Dorsolateral prefrontal cortex (tissue), 120 donors: ENCODE measurements at regions of chr13 and their contacts with region 1.

Region 1: GRCh38 chr13:52450012-52450792 is at the start of gene VPS36:
- DNase-seq: peak; percentile 91 to 98 (median 94)
- H3K4me3 ChIP-seq: peak within 1 kb of the TSS; percentile 63 to 96 (median 82)
- H3K27ac ChIP-seq: peak within 1 kb of the TSS; percentile 53 to 97 (median 90)
- H3K27me3 ChIP-seq: no peaks in the 10 kb centered on the region
- CTCF ChIP-seq: peak; percentile 95 to 100 (median 99)
- total RNA-seq, gene VPS36: 34.5 to 82.0 (median 58.9) TPM

Region 2: DNA sequence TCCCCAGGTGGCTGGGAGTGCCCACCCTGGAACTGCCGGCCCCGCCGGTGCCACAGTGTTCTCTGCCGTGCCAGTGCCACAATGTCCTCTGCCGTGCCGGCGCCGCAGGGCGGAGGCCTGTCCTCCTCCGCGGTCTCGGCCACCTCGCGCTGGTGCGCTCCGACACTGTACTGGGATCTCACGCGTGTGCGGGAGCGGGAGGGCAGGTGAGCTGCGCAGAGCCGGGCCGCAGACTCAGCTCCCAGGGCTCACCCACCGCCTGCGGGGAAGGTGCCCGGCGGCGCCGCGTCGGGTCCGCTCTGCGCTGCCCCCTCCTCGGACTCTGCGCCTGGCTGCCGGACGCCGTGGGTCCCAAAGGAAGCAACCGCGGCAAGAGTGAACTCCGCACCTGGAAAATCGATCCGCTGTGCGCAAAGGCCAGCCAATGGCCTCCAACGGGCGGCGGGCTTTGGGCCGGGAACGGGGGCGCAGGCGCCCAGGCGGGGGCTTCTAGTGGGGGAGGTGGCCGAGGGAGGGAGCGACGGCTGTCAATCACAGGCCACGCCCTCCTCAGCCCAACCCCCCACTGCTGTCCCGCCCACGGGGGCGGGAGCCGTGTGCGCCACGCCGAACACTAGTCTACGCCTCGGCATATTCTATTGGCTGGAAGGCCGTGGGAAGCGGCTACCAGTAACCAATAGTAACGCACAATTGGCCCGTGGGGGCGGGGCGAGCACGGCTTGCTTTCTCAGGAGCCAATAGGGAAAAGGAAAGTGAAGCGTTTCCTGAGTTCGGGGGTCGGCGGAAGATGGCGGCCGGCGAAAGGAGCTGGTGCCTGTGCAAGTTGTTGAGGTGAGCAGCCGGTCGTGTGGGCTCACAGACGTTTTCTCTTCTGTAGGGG is 438.3 kb before region 1 on chr13 and contains the start of gene ALG11:
- intact Hi-C with region 1: loop called (anchors 5 to 10 kb)
- DNase-seq: peak; percentile 99 to 100 (median 99)
- H3K4me3 ChIP-seq: peak within 1 kb of the TSS; percentile 64 to 100 (median 92)
- H3K27ac ChIP-seq: peak within 1 kb of the TSS in 53 of 59 donors; percentile 2 to 85 (median 70)
- H3K27me3 ChIP-seq: no peaks in the 10 kb centered on the region
- CTCF ChIP-seq: peak in 26 of 56 donors; percentile 2 to 49 (median 22)
- total RNA-seq, gene ALG11: 21.8 to 45.8 (median 34.2) TPM

Region 3: DNA sequence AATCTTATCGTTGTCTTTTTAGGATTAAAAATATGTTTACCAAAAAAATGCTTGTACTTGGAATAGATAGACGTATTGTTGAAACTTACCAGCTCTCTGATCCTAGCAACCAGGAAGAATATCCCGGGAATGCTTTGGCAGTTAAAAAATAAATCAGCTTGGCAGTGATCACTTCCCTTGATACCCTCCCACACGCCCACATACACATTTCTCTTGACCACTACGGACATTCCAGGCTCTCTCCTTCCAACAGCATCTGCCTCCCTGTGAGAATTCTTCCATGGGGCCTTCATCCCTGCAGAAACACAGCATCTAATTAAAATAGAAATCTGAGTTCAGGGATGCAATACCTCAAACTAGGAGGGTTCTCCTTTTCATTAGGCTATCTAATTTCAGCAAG is 102.1 kb before region 1 on chr13:
- intact Hi-C with region 1: loop called (anchors 2 to 5 kb)
- DNase-seq: no peak
- H3K4me3 ChIP-seq: no peak overlapping the region
- H3K27ac ChIP-seq: no peak overlapping the region
- H3K27me3 ChIP-seq: peaks cover 0 to 3% (median 0%) of the 10 kb centered on the region in 45 donors
- CTCF ChIP-seq: no peak

Region 4: DNA sequence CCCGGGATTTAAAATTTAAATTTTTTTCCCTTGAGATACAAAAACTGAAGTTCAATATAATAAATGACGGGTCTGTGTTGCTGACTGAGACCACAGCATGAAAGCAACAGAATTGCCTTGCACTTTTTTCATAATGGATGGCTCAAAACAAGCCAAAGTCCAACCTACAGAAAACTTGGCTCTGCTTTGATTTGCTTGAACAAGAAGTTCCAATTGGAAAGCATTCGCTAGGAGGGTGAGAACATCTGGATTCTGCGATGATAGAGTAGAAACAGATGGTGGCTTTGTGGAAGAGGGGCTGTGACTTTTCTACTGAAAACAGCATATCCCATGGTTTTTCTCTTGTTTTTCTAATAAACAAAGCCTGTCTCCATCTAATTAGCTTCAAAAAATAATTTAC is 90.7 kb before region 1 on chr13:
- intact Hi-C with region 1: no loop called
- DNase-seq: no peak
- H3K4me3 ChIP-seq: no peak overlapping the region
- H3K27ac ChIP-seq: no peak overlapping the region
- H3K27me3 ChIP-seq: no peaks in the 10 kb centered on the region
- CTCF ChIP-seq: no peak